Tibial artery (tissue), 4 donors: ENCODE measurements at regions of chr7 and their contacts with region 1.

Region 1: DNA sequence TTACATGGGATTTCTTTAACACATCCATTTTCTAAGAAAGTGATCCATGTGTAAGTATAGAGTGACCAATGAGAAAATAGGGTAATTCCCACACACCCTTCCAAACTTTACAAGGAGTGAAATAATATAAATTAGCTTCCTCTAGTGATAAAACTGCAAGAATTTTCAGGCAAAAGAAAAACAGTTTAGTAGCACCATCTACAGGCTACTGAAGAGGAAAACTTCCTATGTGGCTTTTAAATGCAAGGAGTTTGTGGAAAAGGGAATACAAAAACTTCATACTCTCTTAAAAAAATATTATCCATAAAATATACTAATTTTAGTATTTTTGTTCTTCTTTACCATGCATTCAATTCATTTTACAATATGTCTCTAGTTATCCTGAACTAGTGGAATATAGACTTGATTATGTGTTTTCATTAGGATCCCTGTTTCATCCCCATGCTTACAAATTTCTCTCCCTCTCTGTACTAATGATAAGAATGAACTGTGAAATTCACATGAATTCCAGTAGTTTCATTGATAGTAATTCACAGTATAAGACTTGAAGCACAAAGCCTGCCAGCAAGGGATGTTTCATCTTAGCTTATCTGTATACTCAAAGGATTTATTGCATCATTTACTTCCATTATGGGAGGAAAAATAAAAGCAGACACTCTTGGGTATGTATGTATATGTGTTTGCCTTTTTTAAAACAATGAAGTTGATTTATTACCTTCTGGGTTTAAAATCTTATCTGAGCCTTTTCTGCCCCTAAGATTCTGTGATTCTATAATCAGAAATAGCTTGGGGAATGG is 442.9 kb downstream of the AUTS2 start:
- DNase-seq: no peak
- H3K4me3 ChIP-seq: no peak overlapping the region
- H3K27ac ChIP-seq: no peak overlapping the region
- H3K4me1 ChIP-seq: no peaks in the 10 kb centered on the region
- H3K27me3 ChIP-seq: no peaks in the 10 kb centered on the region
- CTCF ChIP-seq: peak in 1 of 2 experiments; percentile 23

Region 2: GRCh38 chr7:69912846-69913245 is 128.3 kb before region 1 on chr7:
- intact Hi-C with region 1: no loop called
- DNase-seq: no peak
- H3K4me3 ChIP-seq: no peak overlapping the region
- H3K27ac ChIP-seq: no peak overlapping the region
- H3K4me1 ChIP-seq: no peaks in the 10 kb centered on the region
- H3K27me3 ChIP-seq: no peaks in the 10 kb centered on the region
- CTCF ChIP-seq: no peak

Region 3: GRCh38 chr7:70016044-70016770 is 25.0 kb before region 1 on chr7:
- intact Hi-C with region 1: loop called (anchors 2 kb)
- DNase-seq: no peak
- H3K4me3 ChIP-seq: no peak overlapping the region
- H3K27ac ChIP-seq: no peak overlapping the region
- H3K4me1 ChIP-seq: no peaks in the 10 kb centered on the region
- H3K27me3 ChIP-seq: no peaks in the 10 kb centered on the region
- CTCF ChIP-seq: no peak

Region 4: GRCh38 chr7:70698219-70698832 is 657.2 kb after region 1 on chr7:
- intact Hi-C with region 1: loop called (anchors 5 kb)
- DNase-seq: no peak
- H3K4me3 ChIP-seq: no peak overlapping the region
- H3K27ac ChIP-seq: no peak overlapping the region
- H3K4me1 ChIP-seq: peaks cover 0 to 20% (median 11%) of the 10 kb centered on the region in 4 donors
- H3K27me3 ChIP-seq: no peaks in the 10 kb centered on the region
- CTCF ChIP-seq: peak; percentile 77 to 87